K562 (cell line): ENCODE measurements at regions of chr3 and their contacts with region 1.

Region 1: GRCh38 chr3:4978204-4978965 is 852 bp upstream of the BHLHE40 start:
- DNase-seq: peak; percentile 90 to 99 (median 94)
- ATAC-seq: peak; percentile 73
- H3K4me3 ChIP-seq: peak overlapping the region; percentile 52
- H3K27ac ChIP-seq: peak overlapping the region; percentile 97
- H3K4me1 ChIP-seq: peaks cover 40 to 41% of the 10 kb centered on the region in 2 experiments
- H3K27me3 ChIP-seq: no peaks in the 10 kb centered on the region
- CTCF ChIP-seq: peak; percentile 1 to 11 (median 4); a peak in 1 of 6 replicates
- EP300 ChIP-seq: peak; percentile 90
- POLR2A ChIP-seq: peak; percentile 89
- RAD21 ChIP-seq: peak; percentile 30 to 43; a peak in 3 of 4 replicates

Region 2: DNA sequence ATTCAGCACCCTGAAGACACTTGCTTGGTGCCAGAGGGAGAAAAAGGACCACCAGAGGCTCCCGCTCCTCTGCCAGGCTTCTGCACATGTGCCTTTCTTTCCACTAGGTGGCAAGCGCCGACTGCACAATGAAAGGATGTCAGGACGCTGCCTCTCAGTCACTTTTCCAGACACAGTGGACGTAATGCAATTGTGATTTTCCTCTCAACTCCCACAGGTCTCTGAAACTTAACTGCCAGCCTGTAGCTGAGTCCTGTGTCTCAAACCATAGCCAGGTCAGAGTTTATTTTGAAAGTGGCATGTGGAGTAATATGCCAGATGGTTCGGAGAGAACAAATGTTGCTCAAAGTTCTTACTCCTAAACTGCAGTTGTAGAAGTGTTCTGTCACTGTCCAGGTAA is 322.3 kb before region 1 on chr3:
- CTCF ChIA-PET with region 1: no interaction called
- POLR2A ChIA-PET with region 1: no interaction called
- in situ Hi-C with region 1: no loop called
- intact Hi-C with region 1: loop called (anchors 5 kb)
- DNase-seq: peak; percentile 64 to 82 (median 70)
- ATAC-seq: peak; percentile 99
- H3K4me3 ChIP-seq: no peak overlapping the region
- H3K27ac ChIP-seq: no peak overlapping the region
- H3K4me1 ChIP-seq: no peaks in the 10 kb centered on the region
- H3K27me3 ChIP-seq: no peaks in the 10 kb centered on the region
- CTCF ChIP-seq: peak; percentile 90 to 98 (median 96)
- EP300 ChIP-seq: no peak
- POLR2A ChIP-seq: no peak
- RAD21 ChIP-seq: peak; percentile 46 to 81

Region 3: DNA sequence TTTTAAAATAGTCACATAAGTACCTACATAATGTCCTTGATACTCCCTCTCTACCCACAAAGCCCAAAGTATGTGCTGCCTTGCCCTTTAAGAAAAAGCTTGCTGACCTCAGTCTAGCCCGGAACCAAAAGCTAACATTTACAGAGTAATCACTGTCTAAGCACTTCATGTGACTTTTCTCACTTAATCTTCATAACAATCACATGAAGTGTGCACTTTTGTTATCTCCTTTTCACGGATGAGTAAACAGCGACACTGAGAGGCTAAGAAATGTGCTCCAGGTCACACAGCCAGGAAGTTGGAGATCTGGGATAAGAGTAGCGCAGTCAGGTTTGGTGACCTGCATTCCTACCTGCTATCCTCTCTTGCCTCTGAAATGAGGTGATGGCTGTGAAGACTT is 291.2 kb before region 1 on chr3:
- CTCF ChIA-PET with region 1: no interaction called
- POLR2A ChIA-PET with region 1: no interaction called
- in situ Hi-C with region 1: no loop called
- intact Hi-C with region 1: no loop called
- DNase-seq: peak; percentile 24 to 50 (median 36)
- ATAC-seq: peak; percentile 89
- H3K4me3 ChIP-seq: no peak overlapping the region
- H3K27ac ChIP-seq: no peak overlapping the region
- H3K4me1 ChIP-seq: 0 out of 5 replicates have a peak, but pooled peaks cover 0 to 4% of the 10 kb centered on the region in 2 experiments
- H3K27me3 ChIP-seq: no peaks in the 10 kb centered on the region; a peak in 1 of 5 replicates
- CTCF ChIP-seq: peak; percentile 31 to 44 (median 38); a peak in 5 of 6 replicates
- EP300 ChIP-seq: no peak
- POLR2A ChIP-seq: no peak
- RAD21 ChIP-seq: peak in 1 of 2 experiments; percentile 55; a peak in 2 of 4 replicates

Region 4: DNA sequence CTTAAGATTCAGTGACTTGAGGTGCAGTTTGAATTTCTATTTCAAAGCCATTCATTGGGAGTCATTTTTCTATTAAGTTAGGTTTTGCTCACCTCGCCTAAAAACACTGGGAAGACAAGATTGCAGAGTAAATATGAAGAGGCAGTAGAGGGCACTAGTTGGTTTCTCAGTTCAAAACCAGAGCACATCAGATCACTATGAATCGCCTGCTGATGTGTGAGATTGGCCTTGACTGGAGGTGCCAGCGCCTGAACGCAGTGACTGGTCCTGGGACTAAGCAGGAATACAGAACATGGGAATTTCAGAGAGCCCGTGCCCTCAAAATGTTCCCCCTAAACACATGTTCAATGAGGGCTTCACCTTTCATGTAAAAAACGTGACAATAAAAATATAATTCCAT is 256.3 kb before region 1 on chr3:
- CTCF ChIA-PET with region 1: interaction called, 61 read pairs
- POLR2A ChIA-PET with region 1: interaction called, 14 read pairs
- in situ Hi-C with region 1: loop called (anchors 5 kb)
- intact Hi-C with region 1: loop called (anchors 1 kb)
- DNase-seq: peak; percentile 51 to 83 (median 66)
- ATAC-seq: peak; percentile 94
- H3K4me3 ChIP-seq: no peak overlapping the region
- H3K27ac ChIP-seq: no peak overlapping the region
- H3K4me1 ChIP-seq: peaks cover 0 to 20% of the 10 kb centered on the region in 2 experiments; a peak in 4 of 5 replicates
- H3K27me3 ChIP-seq: no peaks in the 10 kb centered on the region
- CTCF ChIP-seq: peak; percentile 76 to 84 (median 81)
- EP300 ChIP-seq: peak; percentile 55; the same call in 1 of the 2 replicates
- POLR2A ChIP-seq: no peak
- RAD21 ChIP-seq: peak; percentile 94 to 97

Region 5: GRCh38 chr3:4770561-4770960 is 207.8 kb before region 1 on chr3:
- CTCF ChIA-PET with region 1: no interaction called
- POLR2A ChIA-PET with region 1: interaction called, 4 read pairs
- in situ Hi-C with region 1: no loop called
- intact Hi-C with region 1: loop called (anchors 1 kb)
- DNase-seq: peak in 1 of 4 experiments; percentile 23
- ATAC-seq: peak; percentile 55
- H3K4me3 ChIP-seq: no peak overlapping the region
- H3K27ac ChIP-seq: no peak overlapping the region
- H3K4me1 ChIP-seq: peaks cover 4 to 15% of the 10 kb centered on the region in 2 experiments
- H3K27me3 ChIP-seq: no peaks in the 10 kb centered on the region
- CTCF ChIP-seq: peak in 2 of 3 experiments; percentile 14 to 38; a peak in 3 of 6 replicates
- EP300 ChIP-seq: no peak
- POLR2A ChIP-seq: no peak
- RAD21 ChIP-seq: peak; percentile 51 to 66

Region 6: GRCh38 chr3:4826237-4827100 is 151.9 kb before region 1 on chr3:
- CTCF ChIA-PET with region 1: no interaction called
- POLR2A ChIA-PET with region 1: interaction called, 13 read pairs
- in situ Hi-C with region 1: no loop called
- intact Hi-C with region 1: loop called (anchors 2 kb)
- DNase-seq: no peak
- ATAC-seq: no peak
- H3K4me3 ChIP-seq: no peak overlapping the region
- H3K27ac ChIP-seq: peak overlapping the region; percentile 16
- H3K4me1 ChIP-seq: peaks cover 45 to 89% of the 10 kb centered on the region in 2 experiments
- H3K27me3 ChIP-seq: no peaks in the 10 kb centered on the region
- CTCF ChIP-seq: no peak
- EP300 ChIP-seq: no peak
- POLR2A ChIP-seq: no peak; the same call in 1 of the 2 replicates
- RAD21 ChIP-seq: no peak

Region 7: DNA sequence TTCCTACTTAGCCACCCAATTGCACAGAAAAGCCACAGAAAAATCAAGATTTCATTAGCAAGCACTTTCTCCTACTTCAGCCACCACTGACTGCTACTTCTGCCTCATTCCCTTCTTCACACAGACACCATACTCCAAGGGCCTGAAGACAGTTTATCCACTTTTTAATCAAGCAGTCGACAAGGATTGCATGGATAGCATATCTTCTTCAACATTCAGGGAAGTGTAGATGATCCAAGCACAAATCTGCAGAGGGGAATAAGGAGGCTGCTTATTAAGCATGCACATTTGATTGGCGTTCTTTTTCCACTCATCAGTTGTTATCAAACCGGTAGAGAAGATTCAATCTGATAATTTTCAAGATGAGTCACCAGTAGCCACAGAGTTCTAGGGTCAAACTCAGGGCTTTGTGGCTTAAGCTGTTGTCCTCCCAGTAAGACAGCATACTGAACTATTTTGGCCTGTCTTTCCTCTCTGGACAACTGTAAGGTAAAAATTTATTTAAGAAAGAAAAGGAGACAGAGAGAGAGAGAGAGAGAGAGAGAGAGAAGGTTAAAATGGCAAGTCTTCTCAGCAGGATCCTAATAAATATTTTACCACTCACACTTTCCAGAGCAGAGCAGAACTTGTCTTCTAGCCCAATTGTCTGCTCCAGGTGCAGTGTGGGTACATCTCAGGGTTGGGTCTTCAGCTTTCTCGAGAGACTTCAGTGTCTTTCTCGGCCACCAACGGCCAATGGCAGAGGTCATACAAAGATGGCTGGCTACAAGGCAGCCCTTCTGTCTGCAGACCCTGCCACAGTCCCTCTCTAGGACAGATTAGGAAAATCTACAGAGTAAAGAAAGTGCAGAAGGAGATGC is 79.7 kb before region 1 on chr3:
- CTCF ChIA-PET with region 1: no interaction called
- POLR2A ChIA-PET with region 1: interaction called, 3 read pairs
- in situ Hi-C with region 1: no loop called
- intact Hi-C with region 1: loop called (anchors 2 kb)
- DNase-seq: peak; percentile 52 to 72 (median 56)
- ATAC-seq: peak; percentile 67
- H3K4me3 ChIP-seq: no peak overlapping the region
- H3K27ac ChIP-seq: peak overlapping the region; percentile 52; the same call in 2 of the 3 replicates
- H3K4me1 ChIP-seq: peaks cover 3 to 48% of the 10 kb centered on the region in 2 experiments; a peak in 4 of 5 replicates
- H3K27me3 ChIP-seq: no peaks in the 10 kb centered on the region
- CTCF ChIP-seq: no peak
- EP300 ChIP-seq: peak; percentile 80
- POLR2A ChIP-seq: no peak
- RAD21 ChIP-seq: peak in 1 of 2 experiments; percentile 16; a peak in 2 of 4 replicates

Region 8: DNA sequence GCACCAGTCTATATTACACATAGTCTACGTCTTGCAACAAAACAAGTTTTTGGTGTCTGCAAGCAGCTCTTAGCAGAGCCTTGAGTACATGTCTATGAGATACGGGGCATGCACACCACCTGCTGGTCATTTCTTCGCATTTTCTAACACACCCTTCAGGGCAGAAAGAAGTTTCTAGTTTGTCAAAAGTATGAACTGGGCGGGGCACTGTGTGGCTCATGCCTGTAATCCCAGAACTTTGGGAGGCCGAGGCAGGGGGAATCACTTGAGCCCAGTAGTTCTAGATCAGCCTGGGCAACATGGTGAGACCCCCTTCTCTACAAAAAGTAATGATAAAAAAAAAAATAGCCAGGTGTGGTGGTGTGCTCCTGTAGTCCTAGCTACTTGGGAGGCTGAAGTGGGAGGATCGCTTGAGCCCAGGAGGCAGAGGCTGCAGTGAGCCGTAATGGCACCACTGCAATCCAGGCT is 79.5 kb after region 1 on chr3:
- CTCF ChIA-PET with region 1: interaction called, 11 read pairs
- POLR2A ChIA-PET with region 1: interaction called, 12 read pairs
- in situ Hi-C with region 1: loop called (anchors 5 kb)
- intact Hi-C with region 1: loop called (anchors 1 kb)
- DNase-seq: peak; percentile 73 to 93 (median 76)
- ATAC-seq: peak; percentile 96
- H3K4me3 ChIP-seq: no peak overlapping the region
- H3K27ac ChIP-seq: no peak overlapping the region
- H3K4me1 ChIP-seq: peaks cover 5 to 36% of the 10 kb centered on the region in 2 experiments; a peak in 4 of 5 replicates
- H3K27me3 ChIP-seq: no peaks in the 10 kb centered on the region
- CTCF ChIP-seq: peak; percentile 88 to 94 (median 91)
- EP300 ChIP-seq: peak; percentile 44; the same call in 1 of the 2 replicates
- POLR2A ChIP-seq: no peak
- RAD21 ChIP-seq: peak; percentile 99